ENCODE measurements at regions of chr1 and their contacts with region 1.

Region 1: GRCh38 chr1:15598436-15598835 is 13.6 kb upstream of the AGMAT start:
- DNase-seq: no peak
- H3K4me3 ChIP-seq: no peak overlapping the region
- H3K27ac ChIP-seq: no peak overlapping the region
- H3K4me1 ChIP-seq: peaks cover 6 to 7% of the 10 kb centered on the region in 2 donors
- H3K27me3 ChIP-seq: no peaks in the 10 kb centered on the region
- CTCF ChIP-seq: no peak
- POLR2A ChIP-seq: no peak

Region 2: DNA sequence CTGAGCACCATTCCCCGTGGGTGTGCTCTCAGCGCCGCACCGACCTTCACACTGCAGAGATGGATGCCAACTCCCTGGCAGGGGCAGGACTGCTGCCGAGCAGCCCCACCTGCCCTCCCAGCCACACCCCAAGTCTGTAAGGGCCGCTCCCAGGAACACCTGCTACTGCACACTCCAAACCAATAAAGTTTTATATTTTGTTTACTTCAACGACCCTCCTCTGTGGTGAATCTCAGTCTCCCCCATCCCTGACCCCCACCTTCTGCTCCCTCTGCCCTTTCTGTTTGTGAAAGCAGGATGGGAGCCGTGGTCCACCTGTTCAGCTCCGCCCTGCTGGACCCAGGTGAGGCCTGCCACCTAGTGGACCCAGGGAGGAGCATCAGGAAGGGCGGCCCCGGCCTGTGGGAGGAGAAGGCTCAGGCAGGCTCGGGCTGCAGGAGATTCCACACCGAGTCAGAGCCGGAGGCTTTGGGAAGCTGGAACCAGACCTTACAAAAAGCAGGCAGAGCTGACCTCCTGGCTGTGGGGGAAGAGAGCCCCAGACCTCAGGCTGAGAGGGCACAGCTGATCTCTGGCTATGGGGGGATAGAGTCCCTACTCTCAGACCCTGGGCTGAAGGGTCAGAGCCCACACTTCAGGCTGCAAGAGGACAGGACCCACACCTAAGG is 142.9 kb after region 1 on chr1:
- intact Hi-C with region 1: loop called (anchors 5 kb)
- DNase-seq: peak; percentile 88 to 91
- H3K4me3 ChIP-seq: no peak overlapping the region
- H3K27ac ChIP-seq: no peak overlapping the region
- H3K4me1 ChIP-seq: peaks cover 7 to 24% of the 10 kb centered on the region in 2 donors
- H3K27me3 ChIP-seq: no peaks in the 10 kb centered on the region
- CTCF ChIP-seq: peak; percentile 65 to 97 (median 90)
- POLR2A ChIP-seq: no peak

Measured in thyroid gland (tissue), 4 donors.